ENCODE measurements at regions of chr17 and their contacts with region 1.

Region 1: DNA sequence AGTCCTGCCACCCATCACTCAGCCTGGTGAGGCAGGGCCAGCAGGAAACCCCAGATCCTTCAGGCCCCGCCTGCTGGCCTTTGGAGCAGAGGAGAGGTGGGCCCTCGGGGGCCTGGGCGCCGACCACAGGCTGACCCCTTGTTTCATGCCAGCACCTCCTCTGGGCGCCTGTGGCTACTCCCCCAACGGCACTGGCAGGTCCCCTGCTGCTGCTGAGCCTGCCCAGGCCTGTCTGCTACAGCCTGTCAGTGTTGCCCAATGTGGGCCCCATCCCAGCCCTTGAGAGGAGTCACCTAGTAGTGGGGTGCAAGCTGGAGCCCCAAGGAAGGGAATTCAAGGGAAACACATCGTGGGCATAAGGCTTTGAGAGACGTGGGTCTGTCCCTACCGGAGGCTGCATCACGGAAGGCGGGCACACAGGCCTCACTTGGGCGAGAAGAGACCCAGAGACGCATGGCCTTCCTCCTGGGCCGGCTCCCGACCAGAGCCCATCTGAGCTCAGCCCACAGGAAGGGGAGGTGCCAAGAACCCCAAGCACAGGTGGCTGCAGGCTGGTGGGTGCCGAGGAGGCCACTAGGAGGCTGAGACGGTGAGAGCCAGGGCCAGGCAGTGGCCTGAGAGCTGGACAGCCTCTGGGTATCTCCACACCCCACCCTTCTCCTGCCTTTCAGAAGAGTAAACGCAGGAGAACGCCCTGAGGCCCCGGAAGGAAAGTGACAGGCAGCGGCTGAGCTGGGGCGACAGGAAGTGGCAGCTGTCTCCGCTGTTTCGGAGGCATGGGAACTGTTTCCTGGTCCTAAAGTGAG is 8.0 kb upstream of the FASN start:
- DNase-seq: peak; percentile 82
- ATAC-seq: peak; percentile 92
- H3K4me3 Mint-ChIP-seq: peak overlapping the region; percentile 80
- H3K27ac Mint-ChIP-seq: peak overlapping the region; percentile 93
- H3K4me1 Mint-ChIP-seq: peaks cover 29% of the 10 kb centered on the region
- H3K27me3 Mint-ChIP-seq: no peaks in the 10 kb centered on the region

Region 2: DNA sequence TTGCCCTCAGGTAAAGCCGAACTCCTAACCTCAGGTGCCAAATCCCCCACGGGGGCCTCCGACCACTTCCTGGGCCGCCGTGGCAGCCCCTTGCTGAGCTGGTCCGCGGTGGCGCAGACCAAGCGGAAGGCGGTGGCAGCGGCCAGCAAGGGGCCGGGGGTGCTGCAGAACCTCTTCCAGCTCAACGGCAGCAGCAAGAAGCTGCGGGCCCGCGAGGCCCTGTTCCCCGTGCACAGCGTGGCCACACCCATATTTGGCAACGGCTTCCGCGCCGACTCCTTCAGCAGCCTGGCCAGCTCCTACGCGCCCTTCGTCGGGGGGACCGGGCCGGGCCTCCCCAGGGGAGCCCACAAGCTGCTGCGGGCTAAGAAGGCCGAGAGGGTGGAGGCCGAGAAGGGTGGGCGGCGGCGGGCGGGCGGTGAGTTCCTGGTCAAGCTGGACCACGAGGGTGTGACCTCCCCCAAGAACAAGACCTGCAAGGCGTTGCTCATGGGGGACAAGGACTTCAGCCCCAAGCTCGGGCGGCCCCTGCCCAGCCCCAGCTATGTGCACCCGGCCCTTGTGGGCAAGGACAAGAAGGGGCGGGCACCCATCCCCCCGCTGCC is 645.1 kb before region 1 on chr17:
- CTCF ChIA-PET with region 1: no interaction called
- DNase-seq: no peak
- ATAC-seq: no peak
- H3K4me3 Mint-ChIP-seq: no peak overlapping the region
- H3K27ac Mint-ChIP-seq: no peak overlapping the region
- H3K4me1 Mint-ChIP-seq: no peaks in the 10 kb centered on the region
- H3K27me3 Mint-ChIP-seq: no peaks in the 10 kb centered on the region

Region 3: DNA sequence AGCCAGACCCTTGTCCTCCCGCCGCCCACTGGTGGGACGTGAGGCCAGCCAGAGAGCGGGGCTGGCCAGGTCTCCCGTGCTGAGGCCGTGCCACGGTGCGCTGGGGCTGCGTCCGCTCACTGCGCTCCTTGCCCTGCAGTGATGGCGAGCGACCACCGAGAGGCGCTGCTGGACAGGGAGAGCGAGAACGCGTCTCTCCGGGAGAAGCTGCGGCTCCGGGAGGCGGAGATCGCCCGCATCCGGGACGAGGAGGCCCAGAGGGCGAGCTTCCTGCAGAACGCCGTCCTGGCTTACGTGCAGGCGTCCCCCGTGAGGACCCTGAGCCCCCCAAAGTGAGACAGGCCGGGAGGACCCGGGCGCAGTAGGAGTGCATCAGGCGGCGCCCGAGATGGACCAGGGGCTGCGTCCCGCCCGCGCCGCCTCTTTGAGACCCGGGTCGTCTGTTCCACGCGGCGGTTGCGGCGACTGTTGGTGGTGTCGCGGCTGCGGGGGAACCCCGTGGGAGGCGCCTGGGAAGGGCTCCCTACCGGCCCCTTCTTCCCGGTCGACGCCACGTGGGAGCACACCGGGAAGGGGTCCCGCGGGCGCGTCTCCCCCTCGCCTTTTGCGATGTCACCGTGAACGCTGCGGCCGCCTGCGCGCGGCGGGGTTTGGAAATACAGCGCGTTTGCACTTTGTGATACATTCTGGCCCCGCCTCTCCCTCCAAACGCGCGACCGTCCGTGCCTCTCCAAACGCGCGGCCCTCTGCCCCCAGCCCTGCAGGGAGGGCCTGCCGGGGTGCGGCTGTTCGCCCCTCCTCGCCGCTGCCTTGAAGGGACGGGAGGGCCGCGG is 75.4 kb before region 1 on chr17:
- CTCF ChIA-PET with region 1: interaction called, 13 read pairs
- DNase-seq: peak; percentile 88
- ATAC-seq: peak; percentile 71
- H3K4me3 Mint-ChIP-seq: peak overlapping the region; percentile 70
- H3K27ac Mint-ChIP-seq: peak overlapping the region; percentile 59
- H3K4me1 Mint-ChIP-seq: peaks cover 28% of the 10 kb centered on the region
- H3K27me3 Mint-ChIP-seq: no peaks in the 10 kb centered on the region

Region 4: DNA sequence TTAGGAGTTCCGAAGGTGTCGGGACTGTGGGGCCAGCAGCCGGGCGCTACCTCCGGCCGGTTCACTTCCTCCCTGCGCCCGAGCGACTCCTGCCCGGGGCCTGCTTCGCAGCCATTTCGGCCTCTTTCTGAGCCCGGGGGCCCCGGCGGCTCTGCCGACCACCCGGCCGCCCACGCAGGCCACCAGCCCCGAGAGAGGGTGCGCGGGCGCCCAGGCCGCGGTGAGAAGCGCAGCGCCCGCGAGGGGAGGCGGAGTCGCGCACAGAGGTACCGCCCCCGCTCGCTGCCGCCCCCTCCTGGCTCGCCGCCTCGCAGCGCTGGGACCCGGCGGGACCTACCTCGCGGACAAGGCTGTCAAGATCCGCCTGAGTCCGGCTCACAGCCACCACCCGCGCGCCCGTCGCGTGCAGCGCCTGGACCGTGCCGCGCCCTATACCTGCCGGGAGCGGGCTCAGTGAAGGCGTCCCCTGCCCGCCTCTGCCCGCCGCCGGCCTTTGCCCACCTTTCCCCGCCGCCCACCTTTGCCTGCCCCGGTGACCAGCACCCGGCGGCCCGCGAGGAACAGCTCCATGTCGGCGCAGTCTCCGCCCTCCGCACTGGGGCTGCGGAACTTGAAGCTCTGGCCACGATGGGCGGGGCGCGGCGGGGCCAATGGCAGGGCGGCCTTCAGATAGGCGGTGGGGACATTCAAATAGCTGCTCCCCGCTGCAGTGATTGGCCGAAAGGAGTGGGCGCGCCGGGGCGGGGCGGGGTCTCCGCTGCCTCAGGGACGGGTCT is 68.8 kb before region 1 on chr17 and contains the start of gene DCXR:
- CTCF ChIA-PET with region 1: interaction called, 13 read pairs
- DNase-seq: peak; percentile 98
- ATAC-seq: peak; percentile 95
- H3K4me3 Mint-ChIP-seq: peak within 1 kb of the TSS; percentile 74
- H3K27ac Mint-ChIP-seq: peak within 1 kb of the TSS; percentile 91
- H3K4me1 Mint-ChIP-seq: peaks cover 24% of the 10 kb centered on the region
- H3K27me3 Mint-ChIP-seq: no peaks in the 10 kb centered on the region
- total RNA-seq, gene DCXR: 120 to 124 TPM

Region 5: GRCh38 chr17:82056729-82057621 is 49.1 kb before region 1 on chr17:
- CTCF ChIA-PET with region 1: no interaction called
- DNase-seq: no peak
- ATAC-seq: no peak
- H3K4me3 Mint-ChIP-seq: no peak overlapping the region
- H3K27ac Mint-ChIP-seq: no peak overlapping the region
- H3K4me1 Mint-ChIP-seq: peaks cover 18% of the 10 kb centered on the region
- H3K27me3 Mint-ChIP-seq: no peaks in the 10 kb centered on the region

Region 6: GRCh38 chr17:82126556-82127314 is 20.6 kb after region 1 on chr17:
- CTCF ChIA-PET with region 1: interaction called, 14 read pairs
- DNase-seq: peak; percentile 81
- ATAC-seq: peak; percentile 89
- H3K4me3 Mint-ChIP-seq: peak overlapping the region; percentile 61
- H3K27ac Mint-ChIP-seq: peak overlapping the region; percentile 85
- H3K4me1 Mint-ChIP-seq: peaks cover 31% of the 10 kb centered on the region
- H3K27me3 Mint-ChIP-seq: no peaks in the 10 kb centered on the region

Measured in activated CD8-positive, alpha-beta memory T cell treated with anti-CD3 and anti-CD28 coated beads, Interleukin-2, amount 10 ng/mL, durations not matched to agents 7 days and 5 days (primary cell).